H1 (cell line): ENCODE measurements at regions of chr2 and their contacts with region 1.

Region 1: GRCh38 chr2:169790581-169790980 is 8.1 kb upstream of the SSB start:
- DNase-seq: no peak
- H3K4me3 ChIP-seq: no peak overlapping the region
- H3K27ac ChIP-seq: no peak overlapping the region
- H3K4me1 ChIP-seq: peaks cover 0 to 12% (median 3%) of the 10 kb centered on the region in 4 experiments; a peak in 2 of 7 replicates
- H3K27me3 ChIP-seq: no peaks in the 10 kb centered on the region
- CTCF ChIP-seq: no peak
- EP300 ChIP-seq: no peak
- POLR2A ChIP-seq: no peak
- RAD21 ChIP-seq: no peak

Region 2: DNA sequence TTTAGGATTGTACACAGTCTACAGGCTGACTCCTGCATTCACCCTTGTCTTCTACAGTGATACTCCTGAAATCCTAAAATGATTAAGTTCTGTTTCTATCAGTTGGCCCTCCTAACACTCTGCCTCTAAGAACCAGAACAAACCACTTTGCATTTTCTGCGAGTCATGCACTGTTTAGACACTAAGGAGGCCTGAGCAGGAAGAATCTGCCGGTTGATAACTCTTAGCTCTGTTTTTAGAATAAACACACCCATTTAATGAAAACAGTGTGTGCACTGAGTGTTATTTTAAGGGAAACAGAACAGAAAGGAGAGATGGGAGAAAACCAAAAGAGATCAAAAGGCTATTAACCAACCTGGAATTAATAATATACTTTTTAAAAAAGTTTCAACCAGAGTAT is 14.8 kb before region 1 on chr2:
- CTCF ChIA-PET with region 1: interaction called, 10 read pairs
- POLR2A ChIA-PET with region 1: no interaction called
- DNase-seq: no peak
- H3K4me3 ChIP-seq: no peak overlapping the region
- H3K27ac ChIP-seq: no peak overlapping the region
- H3K4me1 ChIP-seq: no peaks in the 10 kb centered on the region
- H3K27me3 ChIP-seq: no peaks in the 10 kb centered on the region
- CTCF ChIP-seq: no peak
- EP300 ChIP-seq: no peak
- POLR2A ChIP-seq: no peak
- RAD21 ChIP-seq: no peak

Region 3: GRCh38 chr2:169839954-169840746 is 49.6 kb after region 1 on chr2:
- CTCF ChIA-PET with region 1: no interaction called
- POLR2A ChIA-PET with region 1: no interaction called
- DNase-seq: no peak
- H3K4me3 ChIP-seq: no peak overlapping the region
- H3K27ac ChIP-seq: no peak overlapping the region
- H3K4me1 ChIP-seq: no peaks in the 10 kb centered on the region
- H3K27me3 ChIP-seq: no peaks in the 10 kb centered on the region
- CTCF ChIP-seq: no peak
- EP300 ChIP-seq: no peak
- POLR2A ChIP-seq: no peak
- RAD21 ChIP-seq: no peak; a peak in 1 of 4 replicates

Region 4: GRCh38 chr2:170063456-170064235 is 273.1 kb after region 1 on chr2:
- CTCF ChIA-PET with region 1: no interaction called
- POLR2A ChIA-PET with region 1: no interaction called
- DNase-seq: no peak
- H3K4me3 ChIP-seq: no peak overlapping the region
- H3K27ac ChIP-seq: no peak overlapping the region
- H3K4me1 ChIP-seq: no peaks in the 10 kb centered on the region
- H3K27me3 ChIP-seq: no peaks in the 10 kb centered on the region
- CTCF ChIP-seq: no peak
- EP300 ChIP-seq: no peak
- POLR2A ChIP-seq: no peak
- RAD21 ChIP-seq: no peak